ENCODE measurements at regions of chr3 and their contacts with region 1.

Region 1: GRCh38 chr3:138987181-138987580 is 18.9 kb downstream of the PRR23A start:
- DNase-seq: no peak
- H3K4me3 ChIP-seq: no peak overlapping the region
- H3K27ac ChIP-seq: no peak overlapping the region
- H3K4me1 ChIP-seq: no peaks in the 10 kb centered on the region
- H3K27me3 ChIP-seq: no peaks in the 10 kb centered on the region
- CTCF ChIP-seq: no peak
- EP300 ChIP-seq: no peak
- POLR2A ChIP-seq: no peak
- RAD21 ChIP-seq: no peak

Region 2: DNA sequence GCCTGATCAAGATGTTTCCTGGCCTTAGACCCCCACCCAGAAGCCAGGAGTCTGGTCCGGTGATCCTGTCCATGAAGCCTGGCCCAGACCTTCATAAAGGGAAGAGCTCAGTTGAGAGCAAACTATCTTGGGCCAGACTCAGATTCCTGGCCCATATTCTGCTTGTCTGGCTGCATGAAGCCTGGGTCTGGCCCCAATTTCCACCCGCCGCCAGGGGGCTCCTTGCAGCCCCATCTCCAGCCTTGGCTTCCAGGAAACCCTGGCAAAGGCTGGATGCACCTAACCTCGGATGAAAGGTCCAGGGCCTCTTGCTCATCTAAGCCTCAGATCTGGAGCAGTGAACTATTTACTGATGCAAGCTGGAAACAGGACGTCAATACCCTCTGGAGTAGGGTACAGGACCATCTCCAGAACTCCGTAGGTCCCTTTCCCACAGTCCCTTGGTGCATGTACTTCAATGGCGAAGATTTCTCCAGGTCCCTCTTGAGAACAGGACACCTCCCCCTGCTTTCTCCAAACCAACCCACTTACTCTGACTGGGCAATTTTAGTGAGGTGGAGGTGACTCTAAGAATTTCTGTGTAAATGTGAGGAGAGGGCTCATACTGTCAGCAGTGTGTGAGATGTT is 45.8 kb before region 1 on chr3:
- CTCF ChIA-PET with region 1: interaction called, 223 read pairs
- POLR2A ChIA-PET with region 1: no interaction called
- DNase-seq: peak in 1 of 2 experiments; percentile 88
- H3K4me3 ChIP-seq: no peak overlapping the region
- H3K27ac ChIP-seq: no peak overlapping the region
- H3K4me1 ChIP-seq: peaks cover 6 to 39% (median 23%) of the 10 kb centered on the region in 4 experiments
- H3K27me3 ChIP-seq: peaks cover 96 to 100% (median 98%) of the 10 kb centered on the region in 4 experiments
- CTCF ChIP-seq: peak in 2 of 3 experiments; percentile 89 to 92; a peak in 3 of 4 replicates
- EP300 ChIP-seq: no peak
- POLR2A ChIP-seq: no peak
- RAD21 ChIP-seq: peak; percentile 61 to 75

Region 3: GRCh38 chr3:139281522-139282196 is 294.5 kb after region 1 on chr3:
- CTCF ChIA-PET with region 1: no interaction called
- POLR2A ChIA-PET with region 1: no interaction called
- DNase-seq: no peak
- H3K4me3 ChIP-seq: no peak overlapping the region
- H3K27ac ChIP-seq: no peak overlapping the region
- H3K4me1 ChIP-seq: no peaks in the 10 kb centered on the region
- H3K27me3 ChIP-seq: no peaks in the 10 kb centered on the region
- CTCF ChIP-seq: no peak
- EP300 ChIP-seq: no peak
- POLR2A ChIP-seq: no peak
- RAD21 ChIP-seq: no peak

Measured in H1 (cell line).